Psoas muscle (tissue), 8 donors: ENCODE measurements at regions of chr11 and their contacts with region 1.

Region 1: DNA sequence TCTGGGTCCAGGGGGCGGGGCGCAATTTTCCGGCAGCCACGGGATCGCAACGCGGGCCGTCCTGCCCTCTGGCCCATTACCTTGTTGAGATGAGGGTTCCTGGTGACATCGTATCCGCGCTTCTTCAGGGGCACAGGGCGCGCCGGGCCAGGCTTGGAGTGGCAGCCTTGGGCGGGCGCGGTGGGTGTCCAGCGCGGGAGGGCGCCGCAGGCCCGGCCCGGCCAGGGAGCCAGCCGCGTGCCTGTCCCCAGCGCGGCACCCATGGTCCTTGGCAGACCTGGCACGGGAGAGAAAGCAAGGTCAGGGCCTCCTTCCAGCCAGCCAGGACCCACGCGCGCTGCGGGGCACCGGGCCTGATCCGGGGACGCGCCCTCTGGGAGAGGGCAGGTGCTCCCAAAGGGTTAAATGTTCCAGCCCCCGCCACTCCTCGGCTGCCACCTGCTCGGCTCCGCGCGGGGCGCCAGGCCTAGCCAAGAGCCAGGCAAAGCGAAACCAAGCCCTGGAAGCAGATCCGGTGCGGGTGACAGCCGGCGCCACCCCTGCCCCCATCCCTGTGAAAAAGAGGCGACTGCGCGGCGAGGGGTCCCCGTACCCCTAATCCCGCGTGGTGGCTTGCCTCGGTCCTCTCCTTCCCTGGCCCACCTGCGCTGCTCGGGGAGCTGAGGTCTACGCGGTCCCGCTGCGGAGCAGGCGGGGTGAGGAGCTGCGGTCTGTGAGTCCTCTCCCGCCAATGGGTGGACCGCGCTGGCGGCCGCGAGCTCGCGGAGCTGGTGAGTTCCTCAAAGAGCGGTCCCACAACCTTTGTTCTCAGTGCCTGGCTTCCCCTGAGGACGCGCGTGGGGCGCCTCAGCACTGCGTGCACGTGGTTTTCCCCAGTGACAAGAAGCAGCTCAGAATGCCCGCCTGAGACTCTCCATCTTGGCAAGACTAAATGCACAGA is at the start of gene ME3:
- DNase-seq: peak; percentile 70 to 86
- ATAC-seq: peak; percentile 84 to 88 (median 88)
- H3K4me3 ChIP-seq: peak within 1 kb of the TSS; percentile 79
- H3K27ac ChIP-seq: peak within 1 kb of the TSS; percentile 97
- H3K4me1 ChIP-seq: peaks cover 31% of the 10 kb centered on the region
- H3K27me3 ChIP-seq: no peaks in the 10 kb centered on the region
- CTCF ChIP-seq: no peak
- total RNA-seq, gene ME3: 11.2 to 19.5 (median 14.2) TPM

Region 2: GRCh38 chr11:86632499-86633269 is 39.3 kb before region 1 on chr11:
- intact Hi-C with region 1: loop called (anchors 5 kb)
- DNase-seq: peak; percentile 55 to 59
- ATAC-seq: peak; percentile 48 to 78 (median 76)
- H3K4me3 ChIP-seq: no peak overlapping the region
- H3K27ac ChIP-seq: no peak overlapping the region
- H3K4me1 ChIP-seq: peaks cover 33% of the 10 kb centered on the region
- H3K27me3 ChIP-seq: no peaks in the 10 kb centered on the region
- CTCF ChIP-seq: peak; percentile 23

Region 3: DNA sequence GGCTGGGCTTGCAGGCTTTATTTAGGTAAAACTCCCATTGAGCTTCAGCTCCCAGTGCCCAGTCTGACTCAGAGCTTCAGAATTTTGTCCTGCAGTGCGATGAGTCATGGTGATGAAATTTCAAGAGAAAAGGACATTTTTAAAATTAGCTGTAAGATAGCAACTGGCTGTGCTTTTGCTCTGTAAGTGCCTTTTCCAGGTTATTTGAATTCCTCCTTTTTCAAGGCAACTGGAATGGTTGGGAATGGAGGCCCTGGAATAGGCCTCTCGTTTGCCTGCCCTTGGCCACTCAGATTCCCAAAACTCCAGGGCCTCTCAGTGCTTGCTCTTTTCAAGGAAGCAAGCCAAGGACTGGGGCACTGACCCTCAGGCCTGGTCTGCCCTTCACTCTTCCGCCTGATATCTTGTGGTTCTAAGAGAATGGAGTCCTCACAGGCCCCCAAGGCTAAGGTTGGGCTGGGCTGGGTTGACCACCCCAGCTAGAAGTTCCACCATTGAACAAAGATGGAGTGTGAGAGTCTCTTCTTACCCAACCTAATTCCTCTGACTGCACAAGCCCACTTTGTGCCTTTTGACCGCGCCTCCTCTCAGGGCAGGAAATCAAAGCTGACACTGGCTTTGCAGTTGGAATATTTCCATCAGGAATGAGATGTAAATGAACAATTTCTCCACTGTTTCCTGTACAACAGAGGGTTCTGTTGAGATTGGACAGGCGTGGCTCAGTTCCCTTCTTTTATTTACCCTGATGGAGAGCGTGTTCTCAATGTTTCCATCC is 68.9 kb after region 1 on chr11:
- intact Hi-C with region 1: loop called in 1 of 2 experiments (anchors 5 kb)
- DNase-seq: peak; percentile 26 to 52
- ATAC-seq: peak; percentile 42 to 57 (median 51)
- H3K4me3 ChIP-seq: no peak overlapping the region
- H3K27ac ChIP-seq: peak overlapping the region; percentile 75
- H3K4me1 ChIP-seq: peaks cover 31% of the 10 kb centered on the region
- H3K27me3 ChIP-seq: no peaks in the 10 kb centered on the region
- CTCF ChIP-seq: no peak

Region 4: GRCh38 chr11:86802601-86803051 is 130.7 kb after region 1 on chr11:
- intact Hi-C with region 1: loop called (anchors 5 kb)
- DNase-seq: no peak
- ATAC-seq: peak in 1 of 4 donors; percentile 48
- H3K4me3 ChIP-seq: peak overlapping the region; percentile 78
- H3K27ac ChIP-seq: no peak overlapping the region
- H3K4me1 ChIP-seq: peaks cover 15% of the 10 kb centered on the region
- H3K27me3 ChIP-seq: no peaks in the 10 kb centered on the region
- CTCF ChIP-seq: peak; percentile 60